Posterior vena cava (tissue), 2 donors: ENCODE measurements at regions of chr4 and their contacts with region 1.

Region 1: GRCh38 chr4:81214881-81215868 is at the start of gene PRKG2:
- DNase-seq: peak; percentile 76
- total RNA-seq, gene PRKG2: 0.86 to 2.2 TPM

Region 2: DNA sequence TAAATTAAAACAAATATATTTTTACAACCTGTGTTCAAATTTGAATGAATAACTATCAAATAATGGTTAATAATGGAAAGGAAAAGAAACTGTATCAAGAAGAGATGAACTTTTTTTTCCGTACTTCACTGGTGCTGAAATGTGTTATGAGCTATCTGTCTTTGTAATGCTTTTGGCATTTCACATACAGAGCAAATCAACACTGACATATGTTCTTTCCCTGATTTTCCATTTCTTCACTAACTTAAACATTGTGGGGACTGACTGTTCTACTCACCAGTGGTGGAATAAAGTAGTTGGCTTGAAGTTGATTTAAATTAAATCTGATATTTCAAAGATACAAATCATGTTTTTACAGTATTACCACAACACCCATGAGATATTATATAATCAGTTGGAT is 488.7 kb before region 1 on chr4:
- intact Hi-C with region 1: loop called in 1 of 2 experiments (anchors 5 kb)
- DNase-seq: no peak